HepG2 (cell line): ENCODE measurements at regions of chr12 and their contacts with region 1.

Region 1: DNA sequence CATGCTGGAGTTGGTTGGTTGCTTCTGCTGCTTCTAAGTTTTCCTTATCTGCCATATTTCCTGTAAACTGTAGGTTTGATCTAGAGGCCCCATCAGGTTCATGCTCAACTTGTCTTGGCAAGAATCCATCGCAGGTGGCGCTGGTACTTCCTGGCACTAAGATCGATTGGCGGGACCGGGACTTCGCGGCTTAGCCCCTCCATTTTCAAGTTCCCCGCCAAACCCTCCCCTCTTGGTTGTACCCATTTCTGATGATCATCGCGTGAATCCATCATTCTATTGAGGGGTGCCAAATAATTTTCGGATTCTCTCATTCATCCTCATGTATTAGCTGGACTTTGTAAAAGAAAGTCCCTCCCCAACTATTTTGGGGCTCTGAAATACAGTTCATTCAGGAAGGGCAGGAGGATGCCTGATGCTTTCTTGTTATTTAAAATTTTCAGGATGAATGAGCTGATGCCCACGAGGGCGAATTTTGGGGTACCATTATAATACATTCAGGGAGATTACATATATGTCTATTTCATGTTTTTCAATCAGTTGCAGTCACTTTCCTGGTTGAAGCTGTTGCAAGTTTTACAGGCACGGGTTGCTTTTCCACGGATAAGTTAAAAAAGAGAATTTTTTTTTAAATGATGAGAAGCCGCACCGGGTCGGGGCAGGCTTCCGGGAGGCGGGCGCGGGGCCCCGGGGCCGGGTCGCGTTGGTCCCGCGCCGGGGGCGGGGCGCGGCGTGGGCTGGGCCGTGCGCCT is 395 bp upstream of the BRI3BP start:
- DNase-seq: peak; percentile 91
- ATAC-seq: peak; percentile 60
- H3K4me3 ChIP-seq: peak overlapping the region; percentile 76 to 91 (median 76)
- H3K27ac ChIP-seq: peak overlapping the region; percentile 58
- H3K4me1 ChIP-seq: peaks cover 43% of the 10 kb centered on the region
- H3K27me3 ChIP-seq: no peaks in the 10 kb centered on the region; a peak in 1 of 5 replicates
- CTCF ChIP-seq: peak; percentile 80
- EP300 ChIP-seq: 0 out of 4 replicates have a peak, but pooled peaks of 1 of the 2 experiments have one; percentile 4
- POLR2A ChIP-seq: no peak
- RAD21 ChIP-seq: no peak

Region 2: GRCh38 chr12:125065021-125065795 is 72.2 kb after region 1 on chr12 and contains the start of gene AACS:
- CTCF ChIA-PET with region 1: no interaction called
- POLR2A ChIA-PET with region 1: no interaction called
- in situ Hi-C with region 1: no loop called
- intact Hi-C with region 1: loop called (anchors 2 kb)
- DNase-seq: peak; percentile 49
- ATAC-seq: peak; percentile 94
- H3K4me3 ChIP-seq: peak within 1 kb of the TSS; percentile 84 to 94 (median 84)
- H3K27ac ChIP-seq: peak within 1 kb of the TSS; percentile 62
- H3K4me1 ChIP-seq: peaks cover 26% of the 10 kb centered on the region
- H3K27me3 ChIP-seq: no peaks in the 10 kb centered on the region; a peak in 1 of 5 replicates
- CTCF ChIP-seq: peak; percentile 46
- EP300 ChIP-seq: no peak
- POLR2A ChIP-seq: peak; percentile 36 to 82; a peak in 3 of 4 replicates
- RAD21 ChIP-seq: peak; percentile 29; the same call in 1 of the 2 replicates
- total RNA-seq, gene AACS: 26.3 and 28.8 TPM in 2 replicates

Region 3: GRCh38 chr12:125092872-125093680 is 100.0 kb after region 1 on chr12:
- CTCF ChIA-PET with region 1: no interaction called
- POLR2A ChIA-PET with region 1: interaction called, 4 read pairs
- in situ Hi-C with region 1: no loop called
- intact Hi-C with region 1: loop called (anchors 2 kb)
- DNase-seq: peak; percentile 92
- ATAC-seq: peak; percentile 83
- H3K4me3 ChIP-seq: peak overlapping the region; percentile 31 to 71 (median 35); a peak in 5 of 6 replicates
- H3K27ac ChIP-seq: peak overlapping the region; percentile 91
- H3K4me1 ChIP-seq: peaks cover 65% of the 10 kb centered on the region
- H3K27me3 ChIP-seq: no peaks in the 10 kb centered on the region
- CTCF ChIP-seq: peak; percentile 85
- EP300 ChIP-seq: no peak
- POLR2A ChIP-seq: peak; percentile 70 to 81
- RAD21 ChIP-seq: peak; percentile 13; the same call in 1 of the 2 replicates